WTC11 (cell line): ENCODE measurements at regions of chr2 and their contacts with region 1.

Region 1: GRCh38 chr2:1140389-1141003 is 189.8 kb downstream of the SNTG2 start:
- DNase-seq: peak; percentile 84
- ATAC-seq: peak; percentile 98
- H3K4me3 Mint-ChIP-seq: no peak overlapping the region
- H3K27ac Mint-ChIP-seq: peak overlapping the region; percentile 9; the same call in 1 of the 2 replicates
- H3K4me1 Mint-ChIP-seq: peaks cover 2% of the 10 kb centered on the region; the same call in 1 of the 2 replicates
- H3K27me3 Mint-ChIP-seq: no peaks in the 10 kb centered on the region
- CTCF ChIP-seq: peak; percentile 99

Region 2: GRCh38 chr2:1153920-1154319 is 13.4 kb after region 1 on chr2:
- CTCF ChIA-PET with region 1: interaction called, 11 read pairs
- POLR2A ChIA-PET with region 1: no interaction called
- DNase-seq: no peak
- ATAC-seq: no peak
- H3K4me3 Mint-ChIP-seq: no peak overlapping the region
- H3K27ac Mint-ChIP-seq: no peak overlapping the region
- H3K4me1 Mint-ChIP-seq: no peaks in the 10 kb centered on the region
- H3K27me3 Mint-ChIP-seq: no peaks in the 10 kb centered on the region
- CTCF ChIP-seq: no peak